Endothelial cell of umbilical vein (primary cell): ENCODE measurements at regions of chr17 and their contacts with region 1.

Region 1: GRCh38 chr17:31722251-31723056 is 136.6 kb downstream of the COPRS start:
- DNase-seq: peak; percentile 97
- H3K4me3 ChIP-seq: no peak overlapping the region
- H3K27ac ChIP-seq: peak overlapping the region; percentile 91
- H3K4me1 ChIP-seq: peaks cover 39% of the 10 kb centered on the region
- H3K27me3 ChIP-seq: no peaks in the 10 kb centered on the region
- CTCF ChIP-seq: no peak
- POLR2A ChIP-seq: peak; percentile 46

Region 2: DNA sequence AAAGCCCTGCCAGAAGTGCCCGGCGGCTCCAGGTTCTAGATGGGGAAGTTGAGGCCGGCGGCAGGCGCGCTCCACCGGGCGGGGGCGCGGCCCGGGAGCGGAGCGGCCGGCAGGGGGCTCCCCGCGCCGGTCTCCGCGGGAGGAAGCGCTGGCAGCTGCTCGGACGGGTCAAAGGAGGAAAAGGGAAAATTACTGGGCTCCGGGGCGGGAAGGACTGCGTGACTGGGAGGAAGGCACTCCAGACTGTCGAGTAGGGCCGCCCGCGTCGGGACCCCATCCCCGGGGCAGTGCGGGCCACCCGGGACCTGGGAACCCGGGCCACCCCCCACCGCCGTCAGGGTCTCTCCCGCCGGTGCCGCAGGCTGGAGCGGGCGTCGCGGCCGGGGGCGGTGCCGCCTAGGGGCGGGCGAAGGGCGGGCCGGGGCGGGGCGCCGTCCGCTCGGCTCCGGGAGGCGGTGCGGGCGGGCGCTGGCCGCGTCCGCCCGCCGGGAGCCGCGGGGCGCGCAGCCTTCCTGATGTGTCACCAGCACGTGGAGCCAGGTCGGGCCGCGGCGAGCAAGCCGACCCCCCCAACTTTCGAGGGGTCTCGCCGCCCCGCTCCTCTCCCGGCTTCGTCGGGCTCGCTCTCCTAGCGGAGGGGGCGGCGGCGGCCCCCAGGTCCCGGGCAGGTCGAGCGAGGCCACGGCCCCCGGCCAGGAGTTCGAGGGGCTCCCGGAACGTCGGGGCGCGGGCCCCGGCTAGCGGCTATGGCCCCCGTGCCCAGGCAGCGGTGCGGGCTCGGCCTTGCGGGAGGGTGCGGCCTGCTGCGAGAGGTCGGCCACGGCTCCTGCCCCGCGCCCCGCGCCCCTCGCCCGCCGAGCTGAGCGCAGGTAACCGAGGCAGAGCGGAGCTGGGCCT is 163.5 kb before region 1 on chr17:
- CTCF ChIA-PET with region 1: interaction called, 4 read pairs
- POLR2A ChIA-PET with region 1: interaction called, 5 read pairs
- dilution Hi-C with region 1: no loop called
- intact Hi-C with region 1: loop called (anchors 1 kb)
- DNase-seq: peak; percentile 81
- H3K4me3 ChIP-seq: peak overlapping the region; percentile 43 to 89 (median 51)
- H3K27ac ChIP-seq: peak overlapping the region; percentile 91
- H3K4me1 ChIP-seq: peaks cover 21% of the 10 kb centered on the region
- H3K27me3 ChIP-seq: peaks cover 0 to 2% of the 10 kb centered on the region in 2 experiments
- CTCF ChIP-seq: peak; percentile 65 to 94
- POLR2A ChIP-seq: peak; percentile 82

Region 3: GRCh38 chr17:31581022-31581490 is 141.4 kb before region 1 on chr17:
- CTCF ChIA-PET with region 1: no interaction called
- POLR2A ChIA-PET with region 1: no interaction called
- dilution Hi-C with region 1: no loop called
- intact Hi-C with region 1: loop called (anchors 1 kb)
- DNase-seq: peak; percentile 78
- H3K4me3 ChIP-seq: no peak overlapping the region
- H3K27ac ChIP-seq: peak overlapping the region; percentile 59
- H3K4me1 ChIP-seq: peaks cover 57% of the 10 kb centered on the region
- H3K27me3 ChIP-seq: no peaks in the 10 kb centered on the region
- CTCF ChIP-seq: no peak
- POLR2A ChIP-seq: peak; percentile 38

Region 4: DNA sequence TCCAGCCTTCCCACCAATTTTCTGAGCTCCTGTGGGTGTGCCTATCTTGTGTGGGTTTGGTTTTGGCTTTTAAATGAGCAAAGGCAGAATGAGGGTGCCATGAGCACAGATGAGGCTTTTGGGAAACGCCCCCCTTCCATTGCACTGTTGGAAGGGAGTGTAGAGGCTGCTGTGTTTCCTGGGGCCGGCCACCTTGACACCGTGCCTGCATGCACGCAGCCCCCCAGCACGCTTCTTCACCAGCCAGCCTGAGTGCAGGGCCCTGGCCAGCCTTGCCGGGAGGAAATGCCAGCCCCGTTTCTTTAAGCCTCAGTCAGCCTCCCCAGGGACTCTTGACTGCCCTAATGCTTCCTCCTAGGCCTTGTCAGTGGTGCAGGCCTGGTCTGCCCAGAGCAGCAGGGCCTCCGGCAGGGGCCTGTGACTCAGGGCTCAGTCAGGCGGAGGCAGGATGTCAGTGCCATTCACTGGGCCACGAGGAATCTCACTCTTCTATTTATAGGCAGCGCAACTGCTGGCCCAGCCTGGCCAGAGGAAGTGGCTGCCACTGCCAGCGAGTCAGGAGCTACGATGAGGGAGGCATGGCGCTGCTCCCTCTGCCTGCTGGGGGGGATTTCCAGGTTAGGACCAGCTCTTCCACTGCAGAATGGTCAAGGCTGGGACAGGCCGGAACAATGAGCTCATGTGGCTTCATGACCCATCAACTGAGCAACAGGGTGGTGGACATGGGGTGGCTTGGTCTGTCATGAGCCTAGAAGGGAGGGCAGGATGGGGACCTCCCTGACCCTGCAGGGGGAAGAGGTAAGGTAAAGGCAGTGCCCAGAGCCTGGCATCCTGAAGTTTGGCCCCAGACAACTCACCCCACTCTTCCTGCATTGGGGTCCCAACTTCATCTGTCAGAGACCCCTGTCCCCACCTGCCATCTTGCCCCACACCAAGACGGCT is 125.8 kb before region 1 on chr17:
- CTCF ChIA-PET with region 1: interaction called, 7 read pairs
- POLR2A ChIA-PET with region 1: no interaction called
- dilution Hi-C with region 1: no loop called
- intact Hi-C with region 1: loop called (anchors 1 kb)
- DNase-seq: peak; percentile 96
- H3K4me3 ChIP-seq: no peak overlapping the region
- H3K27ac ChIP-seq: peak overlapping the region; percentile 79
- H3K4me1 ChIP-seq: peaks cover 18% of the 10 kb centered on the region
- H3K27me3 ChIP-seq: no peaks in the 10 kb centered on the region
- CTCF ChIP-seq: no peak
- POLR2A ChIP-seq: peak; percentile 14

Region 5: GRCh38 chr17:31702041-31702440 is 20.4 kb before region 1 on chr17:
- CTCF ChIA-PET with region 1: interaction called, 3 read pairs
- POLR2A ChIA-PET with region 1: no interaction called
- dilution Hi-C with region 1: no loop called
- intact Hi-C with region 1: loop called (anchors 1 kb)
- DNase-seq: no peak
- H3K4me3 ChIP-seq: no peak overlapping the region
- H3K27ac ChIP-seq: no peak overlapping the region
- H3K4me1 ChIP-seq: no peaks in the 10 kb centered on the region
- H3K27me3 ChIP-seq: peaks cover 4% of the 10 kb centered on the region in 2 experiments
- CTCF ChIP-seq: no peak
- POLR2A ChIP-seq: no peak

Region 6: DNA sequence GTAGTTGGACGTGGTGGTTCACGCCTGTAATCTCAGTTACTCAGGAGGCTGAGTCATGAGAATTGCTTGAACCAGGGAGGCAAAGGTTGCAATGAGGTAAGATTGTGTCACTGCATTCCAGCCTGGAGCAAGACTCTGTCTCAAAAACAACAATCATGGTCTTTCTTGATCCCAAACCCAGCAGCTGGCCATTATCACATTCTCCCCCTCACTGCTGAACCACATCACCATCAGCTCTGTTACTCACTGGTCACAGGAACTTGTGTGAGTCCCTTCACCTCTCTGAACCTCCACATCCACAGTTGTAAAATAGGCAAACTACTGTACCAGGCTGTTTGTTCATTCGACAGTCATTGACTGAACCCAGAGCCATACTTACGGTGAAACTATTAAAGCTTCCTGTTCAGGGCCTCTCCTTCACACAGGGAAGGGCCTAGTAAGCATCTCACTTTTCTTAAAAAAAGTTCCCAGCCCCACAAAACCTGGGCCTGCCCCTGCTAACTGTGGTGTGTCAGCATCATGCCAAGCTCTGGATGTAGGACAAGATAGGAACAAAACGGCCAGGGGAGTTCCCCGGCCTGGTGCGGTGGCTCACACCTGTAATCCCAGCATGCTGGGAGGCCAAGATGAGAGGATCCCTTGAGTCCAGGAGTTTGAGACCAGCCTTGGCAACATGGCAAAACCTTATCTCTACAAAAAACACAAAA is 31.9 kb after region 1 on chr17:
- CTCF ChIA-PET with region 1: no interaction called
- POLR2A ChIA-PET with region 1: no interaction called
- dilution Hi-C with region 1: no loop called
- intact Hi-C with region 1: loop called (anchors 1 kb)
- DNase-seq: peak; percentile 62
- H3K4me3 ChIP-seq: no peak overlapping the region
- H3K27ac ChIP-seq: peak overlapping the region; percentile 66
- H3K4me1 ChIP-seq: peaks cover 11% of the 10 kb centered on the region
- H3K27me3 ChIP-seq: no peaks in the 10 kb centered on the region
- CTCF ChIP-seq: no peak
- POLR2A ChIP-seq: no peak

Region 7: GRCh38 chr17:31778523-31778922 is 56.1 kb after region 1 on chr17:
- CTCF ChIA-PET with region 1: no interaction called
- POLR2A ChIA-PET with region 1: no interaction called
- dilution Hi-C with region 1: no loop called
- intact Hi-C with region 1: loop called (anchors 5 kb)
- DNase-seq: no peak
- H3K4me3 ChIP-seq: no peak overlapping the region
- H3K27ac ChIP-seq: no peak overlapping the region
- H3K4me1 ChIP-seq: no peaks in the 10 kb centered on the region
- H3K27me3 ChIP-seq: peaks cover 7 to 8% of the 10 kb centered on the region in 2 experiments
- CTCF ChIP-seq: no peak
- POLR2A ChIP-seq: no peak

Region 8: GRCh38 chr17:31907342-31907962 is 185.0 kb after region 1 on chr17:
- CTCF ChIA-PET with region 1: no interaction called
- POLR2A ChIA-PET with region 1: no interaction called
- dilution Hi-C with region 1: no loop called
- intact Hi-C with region 1: no loop called
- DNase-seq: peak; percentile 78
- H3K4me3 ChIP-seq: no peak overlapping the region
- H3K27ac ChIP-seq: no peak overlapping the region
- H3K4me1 ChIP-seq: no peaks in the 10 kb centered on the region
- H3K27me3 ChIP-seq: peaks cover 6 to 18% of the 10 kb centered on the region in 2 experiments
- CTCF ChIP-seq: no peak
- POLR2A ChIP-seq: no peak